Endothelial cell of umbilical vein (primary cell): ENCODE measurements at regions of chr7 and their contacts with region 1.

Region 1: DNA sequence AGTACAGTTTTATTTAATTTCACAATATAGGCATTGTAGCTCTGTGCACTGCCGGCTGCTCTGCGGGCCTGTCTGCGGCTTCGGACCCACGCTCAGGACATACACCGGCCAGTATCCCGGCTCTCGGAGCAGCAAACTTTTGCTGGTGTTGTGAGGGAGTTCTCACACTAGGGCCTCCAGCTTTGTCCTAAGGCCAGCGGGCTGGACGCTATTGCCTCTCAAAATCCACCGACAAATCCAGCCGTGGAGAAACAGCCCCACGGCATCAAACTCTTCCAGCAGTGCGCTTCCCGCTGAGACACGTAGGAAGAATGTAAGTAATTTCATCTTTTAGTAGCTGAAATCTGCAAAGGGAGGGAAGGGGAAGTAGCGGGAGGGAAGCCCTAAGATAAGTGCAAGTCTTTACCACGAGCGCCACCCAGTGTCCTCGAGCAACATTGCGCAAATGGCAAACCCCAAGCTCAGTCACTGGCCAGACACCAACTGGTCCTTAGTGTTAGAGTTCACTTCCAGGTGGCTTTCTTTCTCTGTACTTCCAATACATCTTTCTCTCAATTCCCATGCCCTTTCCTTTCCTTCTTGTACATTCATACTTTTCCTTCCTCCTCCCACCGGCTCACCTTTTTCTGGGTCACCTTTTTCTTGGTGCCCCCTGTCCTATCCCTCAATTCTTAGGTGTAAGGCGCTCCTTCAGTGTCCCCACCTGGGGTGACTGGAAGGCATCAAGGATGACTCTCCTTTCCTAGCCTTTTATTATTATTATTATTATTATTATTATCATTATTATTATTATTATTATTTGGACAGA is 3.0 kb upstream of the DLX5 start:
- DNase-seq: peak; percentile 76
- H3K4me3 ChIP-seq: peak overlapping the region in 2 of 3 experiments; percentile 11 to 12
- H3K27ac ChIP-seq: no peak overlapping the region
- H3K4me1 ChIP-seq: peaks cover 4% of the 10 kb centered on the region
- H3K27me3 ChIP-seq: peaks cover 51 to 64% of the 10 kb centered on the region in 2 experiments
- CTCF ChIP-seq: peak; percentile 85 to 86
- POLR2A ChIP-seq: no peak

Region 2: GRCh38 chr7:95723592-95724180 is 1303.9 kb before region 1 on chr7:
- CTCF ChIA-PET with region 1: interaction called, 30 read pairs
- POLR2A ChIA-PET with region 1: no interaction called
- dilution Hi-C with region 1: no loop called
- intact Hi-C with region 1: loop called (anchors 1 kb)
- DNase-seq: peak; percentile 76
- H3K4me3 ChIP-seq: no peak overlapping the region
- H3K27ac ChIP-seq: no peak overlapping the region
- H3K4me1 ChIP-seq: no peaks in the 10 kb centered on the region
- H3K27me3 ChIP-seq: peaks cover 7 to 13% of the 10 kb centered on the region in 2 experiments
- CTCF ChIP-seq: peak; percentile 31 to 32
- POLR2A ChIP-seq: no peak

Region 3: DNA sequence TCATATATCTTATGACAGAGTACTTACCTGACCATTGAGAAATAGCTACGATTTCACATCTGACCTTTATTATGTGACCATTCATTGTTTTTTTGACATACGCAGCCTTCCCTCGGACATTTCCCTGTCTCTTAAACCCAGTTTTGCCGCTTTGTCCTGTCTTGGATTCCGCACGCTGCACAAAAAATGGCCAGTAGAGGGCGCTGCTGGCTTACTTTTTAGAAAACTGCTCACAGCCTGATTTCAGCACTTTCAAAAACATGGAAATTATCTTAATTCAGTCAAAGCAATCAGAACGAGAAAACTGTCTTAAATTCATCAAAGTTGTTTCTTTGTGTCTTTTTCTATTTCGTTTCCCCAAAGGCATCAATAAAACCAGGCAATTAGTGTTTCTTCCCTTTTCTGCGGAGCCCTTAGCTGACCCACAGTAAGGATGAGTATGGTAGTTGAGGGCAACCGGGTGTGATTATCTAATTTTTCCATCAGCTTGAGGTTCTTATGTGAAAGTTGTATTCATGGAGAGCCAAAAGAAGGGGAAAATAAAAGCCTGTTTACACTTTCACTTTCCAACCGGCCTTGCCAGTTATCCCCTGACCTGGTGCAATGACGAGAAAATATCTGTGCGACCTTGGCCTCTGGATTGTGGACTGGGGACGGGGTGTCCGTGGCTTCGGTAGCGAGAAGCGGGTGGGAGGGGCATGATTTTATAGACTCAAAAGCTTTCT is 1110.9 kb before region 1 on chr7:
- CTCF ChIA-PET with region 1: interaction called, 211 read pairs
- POLR2A ChIA-PET with region 1: no interaction called
- dilution Hi-C with region 1: no loop called
- intact Hi-C with region 1: loop called (anchors 1 kb)
- DNase-seq: peak; percentile 77
- H3K4me3 ChIP-seq: no peak overlapping the region
- H3K27ac ChIP-seq: no peak overlapping the region
- H3K4me1 ChIP-seq: no peaks in the 10 kb centered on the region
- H3K27me3 ChIP-seq: peaks cover 20 to 21% of the 10 kb centered on the region in 2 experiments
- CTCF ChIP-seq: peak; percentile 72 to 94
- POLR2A ChIP-seq: no peak

Region 4: DNA sequence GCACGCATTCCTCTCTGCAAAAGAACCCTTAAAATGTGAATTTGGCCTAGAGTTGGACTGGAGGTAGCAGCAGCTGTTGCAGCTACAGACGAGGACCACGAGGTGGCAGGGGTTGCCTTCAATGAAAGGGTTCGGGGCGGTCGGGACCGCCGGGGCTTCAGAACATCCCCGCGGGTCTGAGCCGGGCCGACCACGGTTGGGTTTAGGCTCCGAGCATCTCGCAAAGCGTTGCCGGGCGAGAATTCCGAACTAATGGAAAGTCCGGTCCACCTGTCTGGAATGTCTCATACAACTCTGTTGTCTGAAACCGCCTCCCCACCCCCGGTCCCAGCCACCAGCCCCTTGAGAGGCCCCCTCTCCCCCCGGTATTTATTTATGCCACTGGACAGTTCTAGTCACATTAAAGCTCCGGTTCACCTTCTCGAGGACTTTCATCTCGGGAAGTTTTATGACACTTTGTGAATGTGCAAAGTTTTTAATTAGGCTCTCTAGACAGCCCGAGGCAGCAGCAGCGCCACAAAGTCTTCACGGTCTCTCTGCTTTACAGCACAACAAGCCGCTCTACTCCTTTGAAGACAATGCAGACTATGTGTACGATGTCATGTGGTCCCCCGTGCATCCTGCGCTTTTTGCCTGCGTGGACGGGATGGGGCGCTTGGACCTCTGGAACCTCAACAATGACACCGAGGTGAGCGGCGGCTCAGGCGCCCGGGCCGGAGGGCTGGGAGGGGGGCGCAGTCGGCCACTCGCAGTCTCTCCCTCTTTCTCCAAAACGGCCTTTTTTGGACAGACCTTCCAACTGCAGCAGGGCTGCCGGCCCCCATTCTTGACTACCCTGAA is 951.9 kb before region 1 on chr7:
- CTCF ChIA-PET with region 1: interaction called, 125 read pairs
- POLR2A ChIA-PET with region 1: no interaction called
- dilution Hi-C with region 1: no loop called
- intact Hi-C with region 1: loop called (anchors 1 kb)
- DNase-seq: peak; percentile 56
- H3K4me3 ChIP-seq: peak overlapping the region; percentile 46 to 80 (median 80)
- H3K27ac ChIP-seq: no peak overlapping the region
- H3K4me1 ChIP-seq: peaks cover 8% of the 10 kb centered on the region
- H3K27me3 ChIP-seq: peaks cover 0 to 3% of the 10 kb centered on the region in 2 experiments
- CTCF ChIP-seq: peak; percentile 88 to 90
- POLR2A ChIP-seq: no peak

Region 5: GRCh38 chr7:96321658-96322372 is 705.8 kb before region 1 on chr7 and contains the start of gene SLC25A13:
- CTCF ChIA-PET with region 1: no interaction called
- POLR2A ChIA-PET with region 1: no interaction called
- dilution Hi-C with region 1: no loop called
- intact Hi-C with region 1: loop called (anchors 2 kb)
- DNase-seq: peak; percentile 81
- H3K4me3 ChIP-seq: peak within 1 kb of the TSS; percentile 71 to 90 (median 86)
- H3K27ac ChIP-seq: peak within 1 kb of the TSS; percentile 85
- H3K4me1 ChIP-seq: peaks cover 14% of the 10 kb centered on the region
- H3K27me3 ChIP-seq: no peaks in the 10 kb centered on the region
- CTCF ChIP-seq: no peak
- POLR2A ChIP-seq: peak; percentile 74
- total RNA-seq, gene SLC25A13: 34.4 and 36.1 TPM in 2 replicates

Region 6: DNA sequence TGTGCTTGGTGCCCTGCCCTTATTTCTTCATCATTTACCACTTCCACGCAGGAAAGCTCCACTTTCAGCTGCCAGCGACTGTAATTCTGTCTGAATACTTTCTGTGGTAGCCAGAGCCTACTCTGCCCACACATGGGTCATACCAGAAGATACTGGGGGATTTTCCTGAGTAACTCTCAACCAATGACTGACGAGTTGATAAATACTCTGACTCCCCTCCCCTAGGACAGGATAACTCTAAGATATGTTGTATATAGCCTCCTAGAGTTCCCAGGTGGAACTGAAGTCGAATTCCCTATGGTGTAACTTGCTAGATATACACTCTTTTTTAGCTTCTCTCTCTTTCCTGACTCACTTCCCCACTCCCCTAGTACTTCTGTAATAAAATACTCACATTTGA is 347.7 kb before region 1 on chr7:
- CTCF ChIA-PET with region 1: interaction called, 4 read pairs
- POLR2A ChIA-PET with region 1: no interaction called
- dilution Hi-C with region 1: no loop called
- intact Hi-C with region 1: loop called (anchors 10 kb)
- DNase-seq: no peak
- H3K4me3 ChIP-seq: no peak overlapping the region
- H3K27ac ChIP-seq: no peak overlapping the region
- H3K4me1 ChIP-seq: peaks cover 18% of the 10 kb centered on the region
- H3K27me3 ChIP-seq: no peaks in the 10 kb centered on the region
- CTCF ChIP-seq: no peak
- POLR2A ChIP-seq: no peak

Region 7: DNA sequence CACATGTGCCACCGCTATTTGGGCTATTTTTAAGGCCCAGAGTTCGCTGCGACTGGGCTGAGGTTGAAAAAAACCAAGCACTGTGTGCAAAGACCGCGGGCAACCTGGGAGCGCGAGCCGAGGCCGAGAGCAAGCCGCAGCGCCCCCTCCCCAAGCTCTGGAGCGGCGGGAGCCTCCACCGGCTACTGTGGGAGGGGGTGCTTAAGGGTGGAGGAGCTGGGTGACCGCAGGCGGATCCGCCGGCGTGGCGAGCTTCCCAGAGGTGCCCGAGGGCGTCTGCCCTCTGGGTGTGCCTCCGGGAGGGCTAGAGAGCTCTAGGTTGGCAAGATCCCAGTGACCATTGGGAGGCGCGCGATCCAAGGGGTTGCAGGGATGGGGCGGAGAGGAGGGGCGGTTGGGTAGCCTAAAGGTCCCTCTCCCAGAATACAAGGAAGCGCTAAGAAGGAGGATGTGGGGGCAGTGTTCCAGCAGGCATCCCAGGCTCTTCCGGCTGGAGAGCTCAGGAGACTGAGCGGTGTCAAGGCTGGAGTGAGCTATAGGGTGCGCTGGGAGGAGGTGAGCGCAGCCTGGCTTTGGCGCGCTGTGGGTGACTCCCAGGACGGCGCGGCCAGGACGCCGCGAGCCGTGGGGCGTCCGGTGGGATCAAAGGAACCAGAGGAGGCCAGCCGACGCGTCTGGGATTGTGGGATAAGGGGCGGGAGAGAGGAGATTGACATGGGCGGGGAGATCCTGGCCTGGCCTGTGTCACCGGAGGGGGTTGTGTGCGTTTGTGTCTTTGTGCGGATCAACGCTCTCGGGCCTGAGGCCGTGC is 11.0 kb before region 1 on chr7:
- CTCF ChIA-PET with region 1: interaction called, 48 read pairs
- POLR2A ChIA-PET with region 1: no interaction called
- dilution Hi-C with region 1: no loop called
- intact Hi-C with region 1: no loop called
- DNase-seq: no peak
- H3K4me3 ChIP-seq: no peak overlapping the region
- H3K27ac ChIP-seq: no peak overlapping the region
- H3K4me1 ChIP-seq: no peaks in the 10 kb centered on the region
- H3K27me3 ChIP-seq: peaks cover 96 to 98% of the 10 kb centered on the region in 2 experiments
- CTCF ChIP-seq: no peak
- POLR2A ChIP-seq: no peak